ENCODE measurements at regions of chr5 and their contacts with region 1.

Region 1: DNA sequence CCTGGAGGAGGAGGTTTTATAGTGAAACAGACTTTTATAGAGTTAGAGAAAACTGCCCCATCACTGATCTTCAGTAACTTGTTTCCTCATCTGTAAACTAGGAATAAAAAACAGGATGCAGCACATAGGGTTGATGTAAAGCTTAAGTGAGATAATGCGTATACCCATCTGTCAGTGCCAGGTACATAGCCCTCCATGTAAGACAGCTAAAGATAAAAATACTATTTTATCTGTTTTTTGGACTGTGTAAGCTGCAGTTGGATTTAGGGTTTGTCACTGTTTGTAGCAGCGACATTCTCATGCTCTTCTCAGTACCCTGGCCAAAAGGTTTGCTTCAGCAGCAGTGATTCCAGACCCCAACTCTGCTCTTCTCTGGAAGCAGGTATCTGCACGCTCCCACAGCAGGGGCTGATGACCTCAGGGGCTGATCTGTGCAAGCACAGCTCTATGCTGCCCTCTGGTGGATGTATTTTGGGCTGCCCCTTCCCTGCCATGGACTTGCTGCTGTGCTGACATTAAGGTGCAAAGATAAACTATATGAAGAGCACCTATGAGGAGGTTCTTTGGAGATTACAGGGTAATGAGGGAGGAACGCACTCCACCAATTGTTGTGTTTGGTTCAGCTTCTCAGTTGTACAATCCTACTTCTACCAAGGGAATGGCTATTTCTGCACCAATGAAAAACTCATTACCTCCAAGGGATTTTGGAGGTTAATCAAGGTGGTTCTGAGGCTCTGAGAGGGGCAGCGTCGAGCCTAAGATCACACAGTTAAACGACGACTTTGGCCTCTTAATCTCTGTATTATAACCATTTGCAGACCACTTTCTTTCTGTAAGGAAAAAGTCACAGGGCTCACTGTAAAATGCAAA is 13.1 kb downstream of the HMHB1 start:
- DNase-seq: peak; percentile 64
- CTCF ChIP-seq: peak; percentile 87

Region 2: GRCh38 chr5:142922223-142922952 is 902.7 kb before region 1 on chr5:
- in situ Hi-C with region 1: loop called (anchors 10 kb)
- DNase-seq: peak; percentile 62
- CTCF ChIP-seq: peak; percentile 47

Region 3: GRCh38 chr5:143002459-143003328 is 822.4 kb before region 1 on chr5:
- in situ Hi-C with region 1: loop called (anchors 25 kb)
- DNase-seq: peak; percentile 58
- CTCF ChIP-seq: peak; percentile 33

Region 4: GRCh38 chr5:143222287-143223231 is 602.5 kb before region 1 on chr5:
- in situ Hi-C with region 1: loop called (anchors 25 kb)
- DNase-seq: peak; percentile 62
- CTCF ChIP-seq: no peak

Region 5: DNA sequence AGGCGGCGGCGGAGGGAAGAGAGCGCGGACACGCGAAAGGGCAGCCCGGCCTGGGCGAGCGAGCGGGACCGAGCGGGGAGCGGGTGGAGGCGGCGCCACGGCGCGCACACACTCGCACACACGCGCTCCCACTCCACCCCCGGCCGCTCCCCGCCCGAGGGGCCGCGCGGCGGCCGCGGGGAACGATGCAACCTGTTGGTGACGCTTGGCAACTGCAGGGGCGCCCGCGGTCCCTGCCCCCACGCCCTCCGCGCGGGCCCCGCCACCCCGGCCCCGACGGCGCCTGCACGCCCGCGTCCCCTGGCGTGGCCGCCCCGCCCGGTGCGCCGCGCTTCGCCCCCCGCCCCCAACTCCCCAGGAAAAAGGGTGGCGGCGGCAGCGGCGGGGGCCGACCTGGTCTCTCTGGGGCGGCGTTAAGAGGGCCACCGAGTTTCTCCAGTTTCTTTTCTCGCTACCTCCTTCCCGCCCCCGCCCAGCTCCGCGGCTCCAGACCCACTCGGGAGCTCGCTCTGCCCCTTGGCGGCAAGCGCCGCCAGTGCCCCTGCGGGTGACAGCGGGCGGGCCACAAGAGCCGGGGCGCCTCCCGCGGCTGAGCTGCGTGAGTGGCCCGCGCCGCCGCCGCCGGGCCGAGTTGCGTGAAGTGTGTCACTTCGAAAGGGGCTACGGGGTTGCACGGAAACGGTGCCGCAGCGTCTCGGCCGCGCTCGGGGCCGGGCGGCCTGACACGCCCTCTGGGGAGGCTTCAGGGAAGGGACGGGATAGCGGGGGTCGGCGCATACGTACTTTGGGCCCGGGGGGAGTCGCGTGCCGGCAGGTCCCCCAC is 421.3 kb before region 1 on chr5 and contains the start of gene NR3C1:
- in situ Hi-C with region 1: loop called (anchors 10 kb)
- DNase-seq: peak; percentile 82
- CTCF ChIP-seq: peak; percentile 64

Region 6: GRCh38 chr5:143435210-143435657 is 389.9 kb before region 1 on chr5:
- in situ Hi-C with region 1: loop called (anchors 10 kb)
- DNase-seq: peak; percentile 71
- CTCF ChIP-seq: no peak

Measured in GM13976 (cell line).